ENCODE measurements at regions of chr15 and their contacts with region 1.

Region 1: DNA sequence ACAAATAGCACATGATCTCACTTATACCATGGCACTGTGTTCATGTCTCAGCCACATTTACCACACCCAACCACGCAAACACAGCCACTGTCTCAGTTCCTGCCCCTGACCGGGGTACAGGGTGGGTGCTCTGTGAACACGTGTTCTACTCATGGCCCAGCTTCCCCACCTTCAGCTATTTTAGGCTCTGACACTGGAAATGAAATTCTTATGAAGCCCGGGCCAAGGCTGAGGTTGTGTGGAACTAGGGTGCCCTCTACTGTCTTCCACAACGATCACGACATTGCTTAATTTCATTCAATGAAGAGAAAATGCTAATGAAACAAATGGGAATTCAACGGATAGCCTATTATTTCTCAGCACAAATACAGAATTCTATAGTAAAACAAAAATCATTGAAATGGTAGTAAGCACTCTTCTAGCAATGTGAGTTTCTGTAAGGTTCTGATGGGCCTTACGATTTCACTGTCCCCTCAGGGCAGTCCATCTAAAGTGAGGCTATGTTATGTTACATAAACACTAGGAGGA is 2.1 kb upstream of the GABRA5 start:
- DNase-seq: peak in 5 of 10 donors; percentile 34 to 69 (median 50)
- H3K4me3 ChIP-seq: peak overlapping the region in 2 of 59 donors; percentile 0 to 20
- H3K27ac ChIP-seq: peak overlapping the region in 8 of 59 donors; percentile 12 to 64 (median 30)
- H3K27me3 ChIP-seq: peaks cover 0 to 42% (median 18%) of the 10 kb centered on the region in 45 donors
- CTCF ChIP-seq: peak; percentile 32 to 81 (median 66)

Region 2: DNA sequence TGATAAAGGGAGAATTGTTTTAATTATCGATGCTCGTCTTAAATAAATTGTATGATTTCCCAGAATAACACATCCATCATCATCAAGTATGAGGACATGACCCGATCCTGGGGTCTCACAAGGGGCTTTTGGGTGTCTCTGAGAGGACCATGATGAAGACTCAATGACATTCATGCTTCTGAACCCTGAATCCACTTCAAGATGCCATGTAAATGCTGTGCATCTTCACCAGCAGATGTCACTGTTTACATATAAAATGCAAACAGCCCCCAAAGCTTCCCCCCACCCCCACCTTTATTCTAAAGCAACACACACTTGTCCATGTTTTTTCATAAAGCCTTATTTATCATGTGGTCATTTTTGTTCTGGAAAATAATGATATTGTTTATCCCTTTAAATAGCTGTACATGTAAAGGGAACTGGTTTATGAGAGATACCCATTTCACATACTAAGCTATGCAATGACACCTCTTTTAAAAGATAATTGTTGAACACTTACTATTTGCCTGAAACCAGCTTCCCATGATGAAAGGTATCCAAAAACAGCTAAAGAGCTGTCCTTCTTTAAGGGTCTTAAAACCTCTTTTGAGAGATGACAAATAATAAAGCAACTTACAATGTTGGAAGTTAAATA is 1356.2 kb before region 1 on chr15:
- intact Hi-C with region 1: loop called (anchors 5 to 10 kb)
- DNase-seq: peak in 2 of 10 donors; percentile 23 to 43
- H3K4me3 ChIP-seq: no peak overlapping the region
- H3K27ac ChIP-seq: no peak overlapping the region
- H3K27me3 ChIP-seq: no peaks in the 10 kb centered on the region
- CTCF ChIP-seq: peak; percentile 67 to 94 (median 81)

Region 3: GRCh38 chr15:25947323-25948314 is 917.1 kb before region 1 on chr15:
- intact Hi-C with region 1: loop called in 1 of 2 experiments (anchors 10 kb)
- DNase-seq: peak in 6 of 10 donors; percentile 20 to 58 (median 40)
- H3K4me3 ChIP-seq: no peak overlapping the region
- H3K27ac ChIP-seq: no peak overlapping the region
- H3K27me3 ChIP-seq: no peaks in the 10 kb centered on the region
- CTCF ChIP-seq: peak in 25 of 56 donors; percentile 8 to 40 (median 16)

Region 4: DNA sequence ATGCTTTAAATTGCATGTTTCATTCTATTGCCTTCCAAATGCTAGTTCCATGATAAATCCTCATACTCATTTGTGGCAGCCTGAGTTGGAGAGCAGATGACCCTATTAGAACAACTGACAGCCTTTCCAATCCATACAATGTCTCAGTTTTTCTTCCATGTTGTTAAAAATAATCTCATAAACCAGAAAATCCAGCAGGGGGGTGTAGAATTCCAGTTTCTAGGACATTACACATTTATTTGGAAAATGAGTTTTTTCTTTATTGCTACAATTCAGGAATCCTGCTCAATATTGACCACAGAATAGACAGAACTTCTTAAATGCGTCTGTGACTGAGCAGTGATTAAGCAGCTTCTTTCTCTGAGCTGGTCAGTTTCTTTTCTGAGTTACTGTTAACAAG is 827.4 kb before region 1 on chr15:
- intact Hi-C with region 1: loop called in 1 of 2 experiments (anchors 5 kb)
- DNase-seq: no peak
- H3K4me3 ChIP-seq: no peak overlapping the region
- H3K27ac ChIP-seq: peak overlapping the region in 5 of 59 donors; percentile 3 to 48 (median 28)
- H3K27me3 ChIP-seq: no peaks in the 10 kb centered on the region
- CTCF ChIP-seq: peak in 43 of 56 donors; percentile 10 to 63 (median 35)

Region 5: GRCh38 chr15:26891448-26892181 is 26.9 kb after region 1 on chr15:
- intact Hi-C with region 1: no loop called
- DNase-seq: peak in 9 of 10 donors; percentile 67 to 89 (median 82)
- H3K4me3 ChIP-seq: peak overlapping the region; percentile 16 to 71 (median 50)
- H3K27ac ChIP-seq: peak overlapping the region in 6 of 59 donors; percentile 21 to 64 (median 45)
- H3K27me3 ChIP-seq: peaks cover 0 to 7% (median 0%) of the 10 kb centered on the region in 45 donors
- CTCF ChIP-seq: peak; percentile 68 to 95 (median 86)